ENCODE measurements at regions of chr18 and their contacts with region 1.

Region 1: DNA sequence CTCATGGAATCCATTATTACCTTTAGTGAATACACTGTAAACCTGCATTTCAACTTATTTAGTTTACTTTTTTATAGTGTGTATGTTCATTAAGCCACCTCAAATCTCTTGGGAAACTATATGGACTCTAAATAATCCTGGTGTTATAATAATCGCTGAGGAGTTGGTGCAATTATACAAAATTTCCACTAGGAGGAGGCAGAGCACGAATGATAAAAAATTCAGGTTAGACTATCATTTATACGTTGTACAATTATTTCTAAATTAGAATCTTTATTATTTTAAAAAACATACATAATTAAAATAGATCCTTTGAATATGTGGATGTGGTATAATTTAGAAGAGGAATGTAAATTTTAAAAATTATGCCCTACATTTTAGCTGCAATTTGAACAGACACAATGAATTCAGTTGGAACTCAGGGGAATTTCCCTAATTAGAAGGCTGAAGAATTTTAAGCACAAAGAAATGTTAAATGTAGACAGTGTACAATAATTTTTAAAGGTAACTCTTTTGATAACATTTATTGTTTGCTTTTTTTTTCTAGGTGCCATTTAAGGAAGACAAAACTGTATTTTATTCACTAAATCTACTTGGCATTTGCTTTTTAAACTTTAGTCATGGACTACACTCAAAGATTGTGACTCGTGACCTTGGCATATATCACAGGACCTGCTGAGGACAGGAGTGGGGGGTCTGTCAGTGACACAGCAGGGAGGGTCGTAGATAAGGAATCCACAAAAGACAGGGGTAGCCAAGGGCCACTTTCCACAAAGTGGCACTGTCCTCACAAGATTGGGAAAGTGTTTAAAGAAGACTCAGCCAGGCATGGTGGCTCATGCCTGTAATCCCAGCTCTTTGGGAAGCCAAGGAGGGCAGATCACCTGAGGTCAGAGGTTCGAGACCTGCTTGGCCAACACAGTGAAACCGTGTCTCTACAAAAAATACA is 45.5 kb downstream of the RAB12 start:
- DNase-seq: no peak
- H3K4me3 ChIP-seq: no peak overlapping the region
- H3K27ac ChIP-seq: no peak overlapping the region
- H3K4me1 ChIP-seq: no peaks in the 10 kb centered on the region
- H3K27me3 ChIP-seq: no peaks in the 10 kb centered on the region
- CTCF ChIP-seq: peak; percentile 49 to 85 (median 82)
- POLR2A ChIP-seq: no peak

Region 2: GRCh38 chr18:8595445-8595844 is 59.3 kb before region 1 on chr18:
- intact Hi-C with region 1: no loop called
- DNase-seq: no peak
- H3K4me3 ChIP-seq: no peak overlapping the region
- H3K27ac ChIP-seq: no peak overlapping the region
- H3K4me1 ChIP-seq: no peaks in the 10 kb centered on the region
- H3K27me3 ChIP-seq: no peaks in the 10 kb centered on the region
- CTCF ChIP-seq: no peak
- POLR2A ChIP-seq: no peak

Region 3: DNA sequence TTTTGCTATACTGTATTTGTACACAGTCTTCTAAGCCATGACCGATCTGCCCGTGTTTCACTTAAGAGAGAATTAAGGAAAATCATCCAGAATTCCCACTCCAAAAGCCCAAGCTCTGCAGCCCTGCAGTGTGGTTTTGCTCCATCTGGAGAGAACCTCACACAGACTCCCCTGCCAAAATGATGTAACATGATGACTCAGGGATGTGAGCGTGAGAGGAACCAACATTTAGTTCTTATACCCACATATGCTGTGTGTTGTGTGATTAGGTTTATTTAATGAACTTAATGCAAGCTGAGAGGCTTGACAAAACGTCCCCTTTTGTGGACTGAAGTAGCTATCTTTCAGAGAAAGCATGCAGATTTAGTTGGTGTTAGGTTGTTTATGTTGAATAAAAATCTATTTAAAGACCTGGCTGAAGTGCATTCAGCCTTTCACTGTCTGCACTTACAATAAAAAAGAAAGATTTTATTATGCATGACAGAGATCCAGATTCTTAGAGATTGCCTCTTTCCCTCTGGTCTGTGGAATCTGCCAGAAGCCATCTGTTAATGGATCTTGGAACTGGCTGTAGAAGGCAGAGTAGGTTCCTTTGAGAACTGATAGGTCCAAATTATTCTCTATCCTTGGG is 39.3 kb before region 1 on chr18:
- intact Hi-C with region 1: no loop called
- DNase-seq: peak; percentile 38
- H3K4me3 ChIP-seq: no peak overlapping the region
- H3K27ac ChIP-seq: peak overlapping the region; percentile 26 to 31
- H3K4me1 ChIP-seq: peaks cover 8% of the 10 kb centered on the region
- H3K27me3 ChIP-seq: no peaks in the 10 kb centered on the region
- CTCF ChIP-seq: no peak
- POLR2A ChIP-seq: no peak

Region 4: GRCh38 chr18:8704361-8705279 is 49.8 kb after region 1 on chr18:
- intact Hi-C with region 1: loop called (anchors 5 kb)
- DNase-seq: peak; percentile 88
- H3K4me3 ChIP-seq: peak overlapping the region; percentile 62 to 63
- H3K27ac ChIP-seq: peak overlapping the region; percentile 88 to 90
- H3K4me1 ChIP-seq: peaks cover 8% of the 10 kb centered on the region
- H3K27me3 ChIP-seq: no peaks in the 10 kb centered on the region
- CTCF ChIP-seq: peak in 1 of 4 experiments; percentile 28
- POLR2A ChIP-seq: peak; percentile 68

Region 5: DNA sequence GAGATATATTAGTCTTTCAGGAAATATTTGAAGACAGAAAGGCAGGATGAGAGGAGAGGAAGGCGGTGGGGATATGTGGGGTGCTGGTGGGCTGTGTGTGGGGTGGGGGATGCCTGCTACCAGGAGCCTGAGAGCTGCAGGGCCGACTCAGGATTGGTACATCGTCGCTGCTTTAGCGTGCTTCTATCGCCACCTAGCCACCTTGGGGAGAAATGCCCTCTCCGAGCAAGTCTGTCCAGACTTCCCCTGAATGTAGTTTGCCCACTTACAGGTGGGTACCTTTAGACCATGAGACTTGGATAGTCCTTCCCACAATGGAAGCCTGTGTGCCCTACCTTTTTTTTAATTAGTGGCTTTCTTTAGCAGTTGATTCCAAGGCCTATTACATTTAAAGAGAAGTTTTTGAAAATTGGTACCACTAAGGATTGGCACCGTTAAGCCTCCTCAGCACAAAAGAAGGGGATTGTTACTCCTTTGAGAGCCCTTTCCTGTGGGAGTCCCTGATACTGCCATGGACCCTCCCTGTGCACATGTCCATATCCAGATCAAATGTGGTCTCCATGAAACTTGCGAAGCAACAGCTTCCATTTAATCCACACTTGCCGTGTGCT is 333.6 kb after region 1 on chr18:
- intact Hi-C with region 1: loop called (anchors 2 kb)
- DNase-seq: peak; percentile 38
- H3K4me3 ChIP-seq: no peak overlapping the region
- H3K27ac ChIP-seq: no peak overlapping the region
- H3K4me1 ChIP-seq: no peaks in the 10 kb centered on the region
- H3K27me3 ChIP-seq: no peaks in the 10 kb centered on the region
- CTCF ChIP-seq: peak; percentile 32 to 64 (median 60)
- POLR2A ChIP-seq: no peak

Region 6: GRCh38 chr18:8998481-8999217 is 343.9 kb after region 1 on chr18:
- intact Hi-C with region 1: no loop called
- DNase-seq: no peak
- H3K4me3 ChIP-seq: no peak overlapping the region
- H3K27ac ChIP-seq: no peak overlapping the region
- H3K4me1 ChIP-seq: no peaks in the 10 kb centered on the region
- H3K27me3 ChIP-seq: no peaks in the 10 kb centered on the region
- CTCF ChIP-seq: no peak
- POLR2A ChIP-seq: no peak

Region 7: DNA sequence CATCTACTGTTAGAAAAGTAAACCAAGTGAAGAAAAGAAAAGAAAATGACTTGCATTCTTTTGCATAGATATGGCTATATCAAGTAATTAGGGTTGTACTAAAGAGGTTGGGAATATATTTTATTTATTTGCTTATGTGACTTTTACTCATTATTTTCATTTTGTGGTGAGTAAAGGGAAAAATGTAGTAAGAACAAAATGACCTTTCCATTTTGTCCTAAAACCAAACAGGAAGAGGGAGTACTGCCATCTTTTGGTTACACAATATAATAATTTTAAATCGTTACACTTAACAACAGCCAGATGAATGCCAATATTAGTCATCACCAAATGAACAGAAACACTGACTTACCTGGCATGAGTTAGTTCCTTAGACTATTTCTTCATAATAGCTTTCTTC is 400.4 kb after region 1 on chr18:
- intact Hi-C with region 1: loop called (anchors 10 kb)
- DNase-seq: no peak
- H3K4me3 ChIP-seq: no peak overlapping the region
- H3K27ac ChIP-seq: no peak overlapping the region
- H3K4me1 ChIP-seq: peaks cover 3% of the 10 kb centered on the region
- H3K27me3 ChIP-seq: no peaks in the 10 kb centered on the region
- CTCF ChIP-seq: peak in 2 of 4 experiments; percentile 15 to 28
- POLR2A ChIP-seq: no peak